GM12878 (cell line): ENCODE measurements at regions of chr6 and their contacts with region 1.

Region 1: GRCh38 chr6:164507206-164507940 is 802.0 kb downstream of the C6orf118 start:
- DNase-seq: peak; percentile 77
- ATAC-seq: peak; percentile 93
- H3K4me3 ChIP-seq: no peak overlapping the region
- H3K27ac ChIP-seq: peak overlapping the region; percentile 69
- H3K4me1 ChIP-seq: no peaks in the 10 kb centered on the region
- H3K27me3 ChIP-seq: no peaks in the 10 kb centered on the region
- CTCF ChIP-seq: no peak
- EP300 ChIP-seq: peak; percentile 81 to 91; a peak in 3 of 4 replicates
- POLR2A ChIP-seq: no peak
- RAD21 ChIP-seq: peak; percentile 25; the same call in 1 of the 2 replicates

Region 2: DNA sequence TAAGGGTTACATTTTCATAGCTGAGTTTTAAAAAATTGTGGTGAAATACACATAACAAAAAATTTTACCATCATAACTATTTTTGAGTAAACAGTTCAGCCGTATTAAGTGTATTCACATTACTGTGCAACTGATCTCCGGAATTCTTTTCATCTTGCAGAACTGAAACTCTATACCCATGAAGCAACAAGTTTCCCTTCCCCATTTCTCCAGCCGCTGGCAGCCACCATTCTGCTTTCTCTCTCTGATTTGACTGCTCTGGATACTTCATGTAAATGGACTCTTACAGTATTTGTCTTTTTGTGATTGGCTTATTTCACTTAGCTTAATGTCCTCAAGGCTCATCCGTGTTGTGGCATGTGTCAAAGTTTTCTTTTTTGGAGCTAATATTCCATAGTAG is 751.3 kb before region 1 on chr6:
- CTCF ChIA-PET with region 1: no interaction called
- POLR2A ChIA-PET with region 1: no interaction called
- RAD21 ChIA-PET with region 1: no interaction called
- SMC1A ChIA-PET with region 1: no interaction called
- in situ Hi-C with region 1: no loop called
- intact Hi-C with region 1: loop called (anchors 5 kb)
- DNase-seq: peak; percentile 90
- ATAC-seq: peak; percentile 100
- H3K4me3 ChIP-seq: no peak overlapping the region
- H3K27ac ChIP-seq: no peak overlapping the region
- H3K4me1 ChIP-seq: peaks cover 7% of the 10 kb centered on the region; the same call in 1 of the 2 replicates
- H3K27me3 ChIP-seq: no peaks in the 10 kb centered on the region
- CTCF ChIP-seq: no peak
- EP300 ChIP-seq: peak in 1 of 2 experiments; percentile 95; a peak in 2 of 4 replicates
- POLR2A ChIP-seq: no peak
- RAD21 ChIP-seq: no peak

Region 3: GRCh38 chr6:164396071-164397047 is 111.0 kb before region 1 on chr6:
- CTCF ChIA-PET with region 1: no interaction called
- POLR2A ChIA-PET with region 1: no interaction called
- RAD21 ChIA-PET with region 1: no interaction called
- SMC1A ChIA-PET with region 1: interaction called, 3 read pairs
- in situ Hi-C with region 1: no loop called
- intact Hi-C with region 1: loop called (anchors 5 kb)
- DNase-seq: no peak
- ATAC-seq: peak; percentile 86
- H3K4me3 ChIP-seq: no peak overlapping the region
- H3K27ac ChIP-seq: no peak overlapping the region; the same call in 1 of the 2 replicates
- H3K4me1 ChIP-seq: no peaks in the 10 kb centered on the region
- H3K27me3 ChIP-seq: no peaks in the 10 kb centered on the region
- CTCF ChIP-seq: no peak
- EP300 ChIP-seq: no peak
- POLR2A ChIP-seq: no peak
- RAD21 ChIP-seq: no peak

Region 4: GRCh38 chr6:164477101-164477500 is 30.3 kb before region 1 on chr6:
- CTCF ChIA-PET with region 1: no interaction called
- POLR2A ChIA-PET with region 1: no interaction called
- RAD21 ChIA-PET with region 1: no interaction called
- SMC1A ChIA-PET with region 1: interaction called, 5 read pairs
- in situ Hi-C with region 1: no loop called
- intact Hi-C with region 1: loop called (anchors 2 kb)
- DNase-seq: no peak
- ATAC-seq: no peak
- H3K4me3 ChIP-seq: no peak overlapping the region
- H3K27ac ChIP-seq: no peak overlapping the region
- H3K4me1 ChIP-seq: no peaks in the 10 kb centered on the region
- H3K27me3 ChIP-seq: no peaks in the 10 kb centered on the region
- CTCF ChIP-seq: no peak
- EP300 ChIP-seq: no peak
- POLR2A ChIP-seq: no peak
- RAD21 ChIP-seq: no peak